ENCODE measurements at regions of chr1 and their contacts with region 1.

Region 1: DNA sequence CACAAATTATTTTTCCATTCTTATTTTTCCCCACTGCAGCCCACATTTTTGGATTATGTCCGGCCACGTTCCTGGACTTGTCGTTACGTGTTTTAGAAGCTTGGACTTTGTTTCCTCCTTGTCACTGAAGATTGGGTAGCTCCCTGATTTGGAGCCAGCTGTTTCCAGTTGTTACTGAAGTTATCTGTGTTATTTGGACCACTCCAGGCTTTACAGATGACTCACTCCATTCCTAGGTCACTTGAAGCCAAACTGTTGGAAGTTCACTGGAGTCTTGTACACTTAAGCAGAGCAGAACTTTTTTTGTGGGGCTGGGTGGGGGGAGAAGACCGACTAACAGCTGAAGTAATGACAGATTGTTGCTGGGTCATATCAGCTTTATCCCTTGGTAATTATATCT is 12.2 kb upstream of the AXDND1 start:
- DNase-seq: no peak
- ATAC-seq: peak; percentile 76

Region 2: DNA sequence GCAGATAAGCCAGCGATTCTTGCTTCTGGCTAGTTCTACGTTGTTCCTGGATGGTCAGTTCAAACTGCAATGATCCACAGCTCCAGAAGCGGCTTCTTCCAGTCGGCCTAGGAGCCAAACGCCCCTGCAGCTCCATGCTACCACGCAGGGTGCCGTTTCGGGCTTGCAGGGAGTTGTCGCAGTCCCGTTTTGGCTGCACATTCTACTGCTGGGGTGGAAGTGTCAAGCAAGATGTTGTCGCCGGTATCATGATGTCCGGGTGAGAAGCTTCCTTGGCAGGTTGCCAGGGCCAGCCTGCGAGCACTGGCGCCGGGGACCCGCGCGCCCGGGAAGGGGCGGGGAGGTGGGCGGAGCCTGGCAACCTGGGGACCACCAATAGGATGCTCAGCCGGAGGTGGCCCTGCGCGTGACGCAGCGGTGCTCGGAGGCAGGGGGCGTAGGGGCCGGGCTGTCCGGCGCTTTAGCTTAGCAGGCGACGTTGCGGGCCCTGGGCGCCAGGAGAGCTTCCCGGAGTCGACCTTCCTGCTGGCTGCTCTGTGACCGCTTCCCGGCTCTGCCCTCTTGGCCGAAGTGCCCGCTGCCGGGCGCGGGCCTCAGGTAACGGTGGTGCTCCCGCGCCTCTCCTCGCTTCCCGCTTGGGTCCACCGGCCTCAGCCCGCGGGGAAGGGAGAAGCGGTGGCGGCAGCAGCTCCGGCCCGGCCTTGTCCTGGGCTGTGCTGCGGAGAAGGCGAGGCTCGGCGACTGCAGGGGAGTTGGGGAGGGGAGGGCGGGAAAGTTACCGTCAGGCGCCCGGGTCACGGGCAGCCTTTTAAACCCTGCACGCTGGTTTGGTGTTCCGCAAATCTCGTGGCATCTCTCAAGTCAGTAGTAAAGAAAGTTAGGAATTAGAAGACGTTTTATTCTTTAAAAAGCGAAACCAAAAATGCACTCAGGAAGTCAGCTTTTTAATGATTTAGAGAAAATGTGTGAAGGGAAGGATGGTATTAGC is 59.9 kb before region 1 on chr1 and contains the start of gene SOAT1:
- intact Hi-C with region 1: loop called (anchors 10 kb)
- DNase-seq: peak; percentile 98
- ATAC-seq: peak; percentile 99
- total RNA-seq, gene SOAT1: 31.3 TPM

Measured in sciatic nerve (tissue), 2 donors.